Activated CD4-positive, alpha-beta T cell treated with anti-CD3 and anti-CD28 coated beads for 36 hours (primary cell): ENCODE measurements at regions of chr7 and their contacts with region 1.

Region 1: GRCh38 chr7:151631968-151632749 is 112.5 kb upstream of the RHEB start:
- DNase-seq: peak; percentile 91
- ATAC-seq: peak; percentile 72
- H3K4me3 Mint-ChIP-seq: peak overlapping the region; percentile 92
- H3K27ac Mint-ChIP-seq: peak overlapping the region; percentile 98
- H3K4me1 Mint-ChIP-seq: peaks cover 22% of the 10 kb centered on the region
- H3K27me3 Mint-ChIP-seq: no peaks in the 10 kb centered on the region

Region 2: GRCh38 chr7:151080522-151081169 is 551.5 kb before region 1 on chr7 and contains the start of gene FASTK:
- CTCF ChIA-PET with region 1: no interaction called
- POLR2A ChIA-PET with region 1: no interaction called
- intact Hi-C with region 1: loop called in 1 of 2 experiments (anchors 5 kb)
- DNase-seq: peak; percentile 94
- ATAC-seq: peak; percentile 89
- H3K4me3 Mint-ChIP-seq: peak within 1 kb of the TSS; percentile 94
- H3K27ac Mint-ChIP-seq: peak within 1 kb of the TSS; percentile 91
- H3K4me1 Mint-ChIP-seq: peaks cover 43% of the 10 kb centered on the region
- H3K27me3 Mint-ChIP-seq: peaks cover 7% of the 10 kb centered on the region
- total RNA-seq, gene FASTK: 56.6 to 56.7 TPM

Region 3: GRCh38 chr7:151519765-151520418 is 112.3 kb before region 1 on chr7 and contains the start of gene RHEB:
- CTCF ChIA-PET with region 1: no interaction called
- POLR2A ChIA-PET with region 1: interaction called, 4 read pairs
- intact Hi-C with region 1: loop called (anchors 1 to 2 kb)
- DNase-seq: peak; percentile 99
- ATAC-seq: peak; percentile 90
- H3K4me3 Mint-ChIP-seq: peak within 1 kb of the TSS; percentile 84
- H3K27ac Mint-ChIP-seq: peak within 1 kb of the TSS; percentile 97
- H3K4me1 Mint-ChIP-seq: peaks cover 35% of the 10 kb centered on the region
- H3K27me3 Mint-ChIP-seq: no peaks in the 10 kb centered on the region
- total RNA-seq, gene RHEB: 42.8 to 43.0 TPM

Region 4: GRCh38 chr7:151572136-151572535 is 60.0 kb before region 1 on chr7:
- CTCF ChIA-PET with region 1: no interaction called
- POLR2A ChIA-PET with region 1: no interaction called
- intact Hi-C with region 1: no loop called
- DNase-seq: no peak
- ATAC-seq: no peak
- H3K4me3 Mint-ChIP-seq: no peak overlapping the region
- H3K27ac Mint-ChIP-seq: no peak overlapping the region
- H3K4me1 Mint-ChIP-seq: no peaks in the 10 kb centered on the region
- H3K27me3 Mint-ChIP-seq: no peaks in the 10 kb centered on the region

Region 5: GRCh38 chr7:151769188-151769841 is 137.2 kb after region 1 on chr7:
- CTCF ChIA-PET with region 1: no interaction called
- POLR2A ChIA-PET with region 1: no interaction called
- intact Hi-C with region 1: loop called in 1 of 2 experiments (anchors 1 kb)
- DNase-seq: peak; percentile 49
- ATAC-seq: peak; percentile 85
- H3K4me3 Mint-ChIP-seq: peak overlapping the region; percentile 40
- H3K27ac Mint-ChIP-seq: peak overlapping the region; percentile 93
- H3K4me1 Mint-ChIP-seq: peaks cover 51% of the 10 kb centered on the region
- H3K27me3 Mint-ChIP-seq: no peaks in the 10 kb centered on the region

Region 6: DNA sequence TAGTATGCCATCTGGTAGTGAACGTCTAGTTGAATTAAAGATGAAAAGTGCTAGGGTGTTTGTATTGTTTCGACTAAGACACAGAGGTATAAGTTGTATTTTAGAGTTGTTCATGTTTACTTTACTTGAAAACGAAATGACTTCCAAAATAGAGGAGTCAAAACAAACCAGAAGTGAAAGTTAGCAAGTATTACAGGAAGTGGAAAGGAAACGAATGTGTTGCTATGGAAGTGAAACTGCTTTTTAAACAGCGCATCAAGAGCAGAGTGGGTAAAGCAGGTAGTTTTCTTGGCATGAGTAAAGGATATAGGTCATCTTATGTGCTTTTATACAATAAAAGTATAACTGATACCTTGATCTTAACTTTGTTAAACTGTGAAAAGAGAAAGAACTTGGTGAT is 304.0 kb after region 1 on chr7:
- CTCF ChIA-PET with region 1: interaction called, 3 read pairs
- POLR2A ChIA-PET with region 1: no interaction called
- intact Hi-C with region 1: loop called in 1 of 2 experiments (anchors 2 kb)
- DNase-seq: no peak
- ATAC-seq: peak; percentile 88
- H3K4me3 Mint-ChIP-seq: peak overlapping the region; percentile 43
- H3K27ac Mint-ChIP-seq: peak overlapping the region; percentile 84
- H3K4me1 Mint-ChIP-seq: peaks cover 23% of the 10 kb centered on the region
- H3K27me3 Mint-ChIP-seq: no peaks in the 10 kb centered on the region